HCT116 (cell line): ENCODE measurements at regions of chr19 and their contacts with region 1.

Region 1: DNA sequence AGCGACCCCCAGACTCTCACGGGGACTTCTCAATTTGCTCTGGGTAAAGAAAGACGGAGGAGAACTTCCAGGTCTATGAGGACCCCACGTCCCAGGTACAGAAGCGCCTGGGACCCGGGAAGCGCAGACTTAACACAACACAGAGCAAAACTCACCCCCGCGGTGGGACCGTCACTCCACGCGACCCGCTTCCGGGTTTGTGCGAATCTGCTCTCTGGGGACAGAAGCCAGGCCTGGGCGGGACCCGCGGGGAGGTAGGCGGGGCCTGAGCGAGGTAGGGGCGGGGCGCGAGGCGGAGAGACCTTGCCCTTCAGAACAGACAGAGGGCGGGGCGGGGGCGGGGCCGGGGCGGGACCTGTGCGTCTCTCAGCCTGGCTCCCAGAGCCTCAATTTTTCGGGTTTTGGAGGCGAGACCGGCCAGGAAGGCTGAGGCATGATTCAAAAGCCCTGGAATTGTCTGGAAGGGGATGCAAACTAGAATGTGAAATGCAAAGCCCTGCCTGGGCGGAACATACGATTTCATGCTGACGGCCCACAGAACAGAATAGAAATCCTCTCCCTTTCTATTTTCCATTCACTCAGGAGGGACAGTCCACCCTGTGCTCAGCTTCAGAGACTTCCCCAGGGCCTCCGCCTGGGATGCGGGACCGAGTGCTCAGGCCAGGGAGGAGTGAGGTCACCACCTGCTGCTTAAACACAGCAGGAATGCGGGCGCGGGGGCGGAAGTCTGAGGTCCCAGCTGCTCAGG is 19.3 kb upstream of the ZNF888 start:
- DNase-seq: peak; percentile 59
- ATAC-seq: peak; percentile 98
- H3K4me3 ChIP-seq: peak overlapping the region; percentile 71 to 87
- H3K27ac ChIP-seq: peak overlapping the region; percentile 43; the same call in 1 of the 2 replicates
- H3K4me1 ChIP-seq: peaks cover 5 to 12% of the 10 kb centered on the region in 2 experiments; a peak in 2 of 4 replicates
- H3K27me3 ChIP-seq: no peaks in the 10 kb centered on the region
- CTCF ChIP-seq: no peak
- POLR2A ChIP-seq: no peak
- RAD21 ChIP-seq: no peak

Region 2: DNA sequence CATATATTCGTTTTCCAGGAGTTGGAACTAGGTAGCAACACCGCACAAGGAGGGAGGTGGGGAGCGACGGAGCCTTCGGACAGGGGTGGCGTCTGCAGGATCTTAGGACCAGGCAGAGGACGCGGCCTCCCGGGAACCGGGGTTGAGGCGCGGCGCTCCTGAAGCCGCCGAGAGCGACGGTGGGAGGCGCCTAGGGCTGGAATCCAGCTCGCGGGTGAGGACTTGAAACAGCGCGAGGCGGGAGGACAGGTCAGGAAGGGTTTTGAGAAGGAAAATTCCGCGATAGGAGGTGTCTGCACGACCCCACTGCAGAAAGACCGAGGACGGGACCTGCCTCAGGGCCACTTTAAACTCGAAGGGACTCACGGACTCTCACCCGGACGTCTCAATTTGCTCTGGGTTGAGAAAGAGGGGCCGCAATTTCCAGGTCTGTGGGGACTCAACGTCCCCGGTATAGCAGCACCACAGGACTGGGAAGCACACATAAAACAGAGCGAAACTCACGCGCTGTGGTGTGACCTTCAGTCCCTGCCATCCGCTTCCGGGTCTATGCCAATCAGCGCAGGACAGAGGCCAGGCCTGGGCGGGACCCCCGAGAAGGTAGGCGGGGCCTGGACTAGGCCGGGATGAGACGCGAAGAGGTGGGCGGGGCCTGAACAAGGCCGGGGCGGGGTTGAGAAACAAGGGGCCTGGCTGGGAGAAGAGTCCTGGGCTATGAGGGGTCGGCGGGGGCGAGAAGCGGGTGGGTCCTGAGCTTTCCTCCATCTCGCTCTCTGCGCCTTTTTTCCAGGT is 45.2 kb before region 1 on chr19 and contains the start of gene ZNF320:
- CTCF ChIA-PET with region 1: no interaction called
- POLR2A ChIA-PET with region 1: no interaction called
- RAD21 ChIA-PET with region 1: no interaction called
- intact Hi-C with region 1: loop called (anchors 5 kb)
- DNase-seq: peak; percentile 85
- ATAC-seq: peak; percentile 99
- H3K4me3 ChIP-seq: peak within 1 kb of the TSS; percentile 80 to 88
- H3K27ac ChIP-seq: peak within 1 kb of the TSS; percentile 94
- H3K4me1 ChIP-seq: peaks cover 0 to 11% of the 10 kb centered on the region in 2 experiments; a peak in 1 of 4 replicates
- H3K27me3 ChIP-seq: no peaks in the 10 kb centered on the region
- CTCF ChIP-seq: no peak
- POLR2A ChIP-seq: peak; percentile 38
- RAD21 ChIP-seq: no peak
- total RNA-seq, gene ZNF320: 9.2 TPM

Region 3: DNA sequence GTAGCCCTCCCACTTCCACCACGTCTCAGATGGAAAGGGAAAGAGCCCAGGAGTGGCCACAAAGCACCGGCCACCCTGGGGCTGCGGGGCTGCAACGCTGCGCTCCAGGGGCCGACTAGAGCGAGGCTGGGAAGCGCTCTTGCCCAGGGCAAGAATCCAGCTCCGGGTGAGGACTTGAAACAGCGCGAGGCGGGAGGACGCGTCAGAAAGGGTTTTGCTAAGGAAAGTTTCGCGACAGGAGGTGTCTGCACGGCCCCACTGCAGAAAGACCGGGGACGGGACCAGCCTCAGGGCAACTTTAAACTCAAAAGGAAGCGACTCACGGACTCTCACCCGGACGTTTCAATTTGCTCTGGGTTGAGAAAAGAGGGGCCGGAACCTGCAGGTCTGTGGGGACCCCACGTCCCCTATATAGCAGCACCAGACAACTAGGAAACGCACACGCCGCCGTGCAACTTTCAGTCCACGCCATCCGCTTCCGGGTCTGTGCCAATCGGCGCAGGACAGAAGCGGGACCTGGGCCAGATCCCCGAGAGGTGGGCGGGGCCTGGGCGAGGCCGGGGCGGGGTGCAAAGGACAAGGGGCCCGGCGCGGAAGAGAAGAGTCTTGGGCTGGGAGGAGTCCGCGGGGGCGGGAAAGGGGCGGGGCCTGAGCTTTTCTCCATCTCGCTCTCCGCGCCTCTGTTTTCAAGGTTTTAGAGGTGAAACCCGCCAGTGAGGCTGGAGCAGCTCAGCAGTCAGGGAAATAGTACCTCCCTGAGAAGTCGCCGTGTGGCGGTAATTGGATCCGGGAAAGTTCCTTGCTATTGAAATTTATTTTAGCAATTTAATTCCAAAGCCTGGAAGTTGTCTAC is 20.1 kb after region 1 on chr19 and contains the start of gene ZNF816:
- CTCF ChIA-PET with region 1: no interaction called
- POLR2A ChIA-PET with region 1: no interaction called
- RAD21 ChIA-PET with region 1: no interaction called
- intact Hi-C with region 1: loop called (anchors 2 kb)
- DNase-seq: peak; percentile 79
- ATAC-seq: peak; percentile 99
- H3K4me3 ChIP-seq: peak within 1 kb of the TSS; percentile 81 to 83
- H3K27ac ChIP-seq: peak within 1 kb of the TSS; percentile 68
- H3K4me1 ChIP-seq: peaks cover 4 to 13% of the 10 kb centered on the region in 2 experiments
- H3K27me3 ChIP-seq: no peaks in the 10 kb centered on the region
- CTCF ChIP-seq: no peak
- POLR2A ChIP-seq: no peak
- RAD21 ChIP-seq: no peak
- total RNA-seq, gene ZNF816: 8.9 TPM